ENCODE measurements at regions of chr17 and their contacts with region 1.

Region 1: DNA sequence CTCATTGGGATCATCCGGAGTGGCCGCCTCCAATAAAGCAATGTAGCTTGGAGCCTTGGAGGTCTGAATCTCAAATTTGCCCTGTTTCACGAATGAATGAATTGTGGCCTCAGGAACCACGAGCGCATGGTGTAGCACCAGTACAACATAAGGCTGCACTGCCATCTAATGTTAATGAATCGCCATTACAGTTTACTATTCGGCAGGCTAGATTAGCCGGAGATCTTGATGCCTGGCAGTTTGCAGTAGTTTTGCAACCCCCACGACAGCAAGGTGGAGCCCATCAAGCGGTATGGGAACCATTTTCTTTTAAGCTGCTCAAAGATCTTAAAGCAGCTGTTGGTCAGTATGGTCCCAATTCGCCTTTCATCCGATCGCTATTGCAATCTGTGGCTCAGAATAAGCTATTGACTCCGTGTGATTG is 18.8 kb downstream of the ALOX15B start:
- DNase-seq: peak; percentile 63
- ATAC-seq: peak; percentile 89
- H3K4me3 Mint-ChIP-seq: no peak overlapping the region
- H3K27ac Mint-ChIP-seq: no peak overlapping the region
- H3K4me1 Mint-ChIP-seq: peaks cover 4% of the 10 kb centered on the region
- H3K27me3 Mint-ChIP-seq: peaks cover 47% of the 10 kb centered on the region

Region 2: GRCh38 chr17:7740481-7741001 is 317.2 kb before region 1 on chr17:
- CTCF ChIA-PET with region 1: interaction called, 12 read pairs
- POLR2A ChIA-PET with region 1: no interaction called
- intact Hi-C with region 1: loop called (anchors 1 kb)
- DNase-seq: no peak
- ATAC-seq: no peak
- H3K4me3 Mint-ChIP-seq: no peak overlapping the region
- H3K27ac Mint-ChIP-seq: no peak overlapping the region
- H3K4me1 Mint-ChIP-seq: no peaks in the 10 kb centered on the region
- H3K27me3 Mint-ChIP-seq: peaks cover 10% of the 10 kb centered on the region

Region 3: GRCh38 chr17:7862692-7863437 is 194.8 kb before region 1 on chr17:
- CTCF ChIA-PET with region 1: interaction called, 15 read pairs
- POLR2A ChIA-PET with region 1: no interaction called
- intact Hi-C with region 1: loop called in 1 of 2 experiments (anchors 2 kb)
- DNase-seq: peak; percentile 58
- ATAC-seq: no peak
- H3K4me3 Mint-ChIP-seq: no peak overlapping the region
- H3K27ac Mint-ChIP-seq: no peak overlapping the region
- H3K4me1 Mint-ChIP-seq: peaks cover 13% of the 10 kb centered on the region
- H3K27me3 Mint-ChIP-seq: no peaks in the 10 kb centered on the region

Region 4: DNA sequence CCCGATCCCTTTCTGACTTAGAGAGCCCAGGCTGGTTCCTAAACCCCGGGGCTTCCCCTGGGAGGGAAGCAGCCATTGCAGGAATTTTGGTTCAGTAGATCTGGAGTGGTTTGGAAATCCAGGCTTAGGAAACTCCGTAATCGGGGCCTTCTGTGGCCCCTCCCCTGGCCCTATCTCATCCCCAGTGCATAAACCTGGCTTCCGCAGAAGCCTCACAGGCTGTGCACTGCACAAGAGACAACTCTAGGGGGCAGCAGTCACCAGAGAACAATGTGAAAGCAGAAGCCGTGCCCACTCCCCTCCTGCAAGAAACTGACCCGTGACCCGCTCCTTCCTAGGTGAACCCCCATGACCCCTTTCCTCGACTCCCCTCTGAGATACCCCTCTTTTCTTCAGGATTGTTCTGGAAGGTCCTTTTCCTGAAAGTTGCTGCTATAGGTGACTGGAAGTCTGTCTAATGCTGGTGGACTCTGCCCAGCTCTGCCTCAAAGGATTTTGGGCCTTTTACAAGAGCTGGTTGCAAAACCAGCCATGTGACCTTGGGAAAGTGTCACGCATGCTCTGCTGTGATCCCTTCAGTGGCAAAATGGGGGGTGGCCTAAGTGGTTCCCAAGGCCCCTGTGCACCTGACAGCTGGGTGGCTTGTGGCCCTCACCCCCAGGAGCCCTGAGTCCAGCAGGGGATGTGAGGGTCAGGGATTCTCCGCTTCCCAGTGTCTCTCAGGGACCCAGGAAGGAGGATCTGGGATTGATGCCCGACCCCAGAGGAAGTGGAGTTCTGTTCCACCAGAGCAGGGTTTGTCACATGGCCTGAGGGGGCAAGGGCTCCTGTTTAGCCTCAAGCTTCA is 40.8 kb before region 1 on chr17:
- CTCF ChIA-PET with region 1: interaction called, 44 read pairs
- POLR2A ChIA-PET with region 1: no interaction called
- intact Hi-C with region 1: loop called (anchors 1 kb)
- DNase-seq: peak; percentile 80
- ATAC-seq: peak; percentile 91
- H3K4me3 Mint-ChIP-seq: peak overlapping the region; percentile 60
- H3K27ac Mint-ChIP-seq: no peak overlapping the region
- H3K4me1 Mint-ChIP-seq: peaks cover 5% of the 10 kb centered on the region
- H3K27me3 Mint-ChIP-seq: peaks cover 6% of the 10 kb centered on the region

Region 5: DNA sequence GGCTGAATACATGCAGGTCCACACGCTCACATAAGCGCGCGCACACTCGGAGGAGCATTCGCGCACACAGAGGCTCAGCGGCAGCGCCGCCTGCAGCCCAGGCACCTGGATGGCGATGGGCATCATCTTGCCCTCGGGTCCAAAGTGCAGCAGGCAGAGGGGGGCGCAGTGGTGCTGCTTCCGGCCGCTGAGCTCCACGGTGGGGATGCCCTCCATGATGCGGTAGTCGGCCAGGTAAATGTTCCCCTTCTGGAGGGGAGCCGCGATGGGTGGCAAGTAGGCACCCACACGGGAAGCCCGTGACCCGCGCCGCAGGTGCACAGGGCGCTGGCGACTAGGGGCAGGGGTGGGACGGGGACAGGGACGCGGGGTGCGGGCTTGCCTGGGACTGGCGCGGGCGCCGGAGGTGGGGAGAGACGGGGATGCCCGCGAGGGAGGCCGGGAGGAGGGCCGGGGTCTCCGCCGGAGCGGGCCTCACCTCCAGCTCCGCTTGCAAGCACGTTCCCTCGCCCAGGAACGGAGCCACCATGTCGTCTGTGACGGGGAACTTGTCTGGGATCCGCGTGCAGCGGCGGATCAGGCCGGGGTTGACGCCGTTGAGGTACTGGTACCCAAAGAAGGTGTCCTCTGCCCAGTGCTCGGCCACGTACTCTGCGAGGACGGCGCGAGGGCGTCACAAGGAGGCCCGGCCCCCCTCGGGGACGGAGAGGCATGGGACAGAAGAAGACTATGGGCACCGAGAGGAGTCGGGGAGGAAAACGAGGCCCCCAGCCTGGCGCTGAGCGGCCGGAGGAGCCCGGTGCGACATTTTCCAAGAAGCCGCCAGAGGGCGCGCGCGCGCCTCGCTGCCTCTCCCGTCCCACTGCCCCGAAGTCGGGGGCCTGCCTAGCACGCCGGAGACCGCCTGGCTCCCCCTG is 21.8 kb after region 1 on chr17:
- CTCF ChIA-PET with region 1: interaction called, 315 read pairs
- POLR2A ChIA-PET with region 1: interaction called, 3 read pairs
- intact Hi-C with region 1: loop called (anchors 1 kb)
- DNase-seq: peak; percentile 92
- ATAC-seq: peak; percentile 94
- H3K4me3 Mint-ChIP-seq: peak overlapping the region; percentile 94
- H3K27ac Mint-ChIP-seq: peak overlapping the region; percentile 92
- H3K4me1 Mint-ChIP-seq: peaks cover 12% of the 10 kb centered on the region
- H3K27me3 Mint-ChIP-seq: peaks cover 5% of the 10 kb centered on the region

Region 6: DNA sequence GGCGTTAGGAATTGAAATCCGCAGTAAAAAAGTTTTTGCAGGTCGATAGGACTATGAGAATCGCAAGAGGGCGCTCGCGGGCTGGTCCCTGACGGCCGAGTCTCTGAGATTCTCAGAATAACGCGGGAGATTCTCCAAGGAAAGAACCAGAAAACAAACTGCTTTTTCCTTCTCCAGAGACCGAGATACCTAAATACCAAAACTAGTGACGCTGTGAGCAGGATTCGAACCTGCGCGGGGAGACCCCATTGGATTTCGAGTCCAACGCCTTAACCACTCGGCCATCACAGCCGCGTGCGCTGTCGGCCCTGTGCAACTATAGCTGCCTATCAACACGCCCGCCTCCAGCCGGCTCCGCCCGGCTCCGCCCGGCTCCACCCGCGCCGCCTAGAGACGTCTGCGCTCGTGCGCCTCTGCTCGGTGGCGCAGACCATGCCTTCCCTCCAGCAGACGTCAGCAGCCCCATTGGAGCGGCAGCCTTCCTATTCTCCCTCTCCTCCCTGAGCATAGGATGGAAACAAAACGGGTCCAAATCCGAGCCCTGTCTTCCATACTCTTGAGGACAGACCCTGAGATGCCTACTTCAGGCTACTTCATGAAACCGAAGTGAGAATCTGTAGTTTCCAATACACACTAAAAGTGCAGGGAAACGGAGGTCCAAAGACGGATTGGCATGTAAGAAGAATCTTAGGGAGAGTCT is 81.1 kb after region 1 on chr17:
- CTCF ChIA-PET with region 1: interaction called, 10 read pairs
- POLR2A ChIA-PET with region 1: no interaction called
- intact Hi-C with region 1: no loop called
- DNase-seq: peak; percentile 98
- ATAC-seq: peak; percentile 90
- H3K4me3 Mint-ChIP-seq: no peak overlapping the region
- H3K27ac Mint-ChIP-seq: no peak overlapping the region
- H3K4me1 Mint-ChIP-seq: no peaks in the 10 kb centered on the region
- H3K27me3 Mint-ChIP-seq: no peaks in the 10 kb centered on the region

Measured in activated CD4-positive, alpha-beta T cell treated with anti-CD3 and anti-CD28 coated beads for 36 hours (primary cell).